Endothelial cell of umbilical vein (primary cell): ENCODE measurements at regions of chr2 and their contacts with region 1.

Region 1: GRCh38 chr2:241637000-241637791 is at the starts of genes ATG4B and THAP4:
- DNase-seq: peak; percentile 85
- H3K4me3 ChIP-seq: peak within 1 kb of the TSS; percentile 64 to 99 (median 95)
- H3K27ac ChIP-seq: peak within 1 kb of the TSS; percentile 92
- H3K4me1 ChIP-seq: peaks cover 12% of the 10 kb centered on the region
- H3K27me3 ChIP-seq: no peaks in the 10 kb centered on the region
- CTCF ChIP-seq: no peak
- POLR2A ChIP-seq: peak; percentile 76
- total RNA-seq, gene ATG4B: 83.6 and 85.6 TPM in 2 replicates
- total RNA-seq, gene THAP4: 47.4 and 49.0 TPM in 2 replicates

Region 2: DNA sequence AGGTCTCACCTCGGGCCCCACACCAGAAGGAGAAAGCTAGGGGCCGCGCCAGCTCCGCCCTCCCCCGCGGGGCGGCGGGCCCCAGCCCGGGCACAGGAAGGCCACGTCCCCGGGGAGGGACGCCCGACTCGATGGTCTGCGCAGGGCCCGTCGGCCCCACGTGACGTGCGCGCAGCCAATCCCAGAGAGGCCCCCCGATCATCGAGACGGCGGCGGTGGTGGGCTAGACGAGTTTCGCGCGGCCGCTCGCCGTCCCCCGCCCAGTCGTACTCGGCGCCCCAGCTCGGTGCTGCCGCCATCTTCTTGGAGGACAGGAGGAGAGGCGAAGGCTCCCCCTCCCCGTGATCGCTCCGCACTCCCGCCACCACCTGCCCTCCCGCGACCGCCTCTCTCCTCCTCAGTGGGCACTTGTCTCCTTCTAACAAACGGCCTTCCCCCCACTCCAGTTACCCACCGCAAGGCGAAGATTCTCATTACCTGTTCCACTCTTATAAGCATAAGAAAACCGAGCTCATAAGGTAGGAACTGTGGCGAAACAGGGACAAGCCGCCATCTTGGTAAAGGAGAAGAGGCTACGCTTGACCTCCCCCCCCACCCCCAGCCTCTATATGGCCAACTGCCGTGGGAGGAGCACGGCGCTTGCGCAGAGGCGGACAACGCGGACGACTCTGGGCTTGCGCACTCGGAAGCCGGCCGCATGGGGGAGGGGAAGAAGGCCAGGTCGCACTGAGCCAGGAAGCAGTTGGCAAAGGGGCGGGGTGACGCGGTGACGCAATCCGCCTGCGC is 321.9 kb before region 1 on chr2 and contains the start of gene HDLBP:
- CTCF ChIA-PET with region 1: no interaction called
- POLR2A ChIA-PET with region 1: no interaction called
- dilution Hi-C with region 1: no loop called
- intact Hi-C with region 1: loop called (anchors 1 kb)
- DNase-seq: peak; percentile 99
- H3K4me3 ChIP-seq: peak within 1 kb of the TSS; percentile 67 to 93 (median 92)
- H3K27ac ChIP-seq: peak within 1 kb of the TSS; percentile 90
- H3K4me1 ChIP-seq: peaks cover 36% of the 10 kb centered on the region
- H3K27me3 ChIP-seq: no peaks in the 10 kb centered on the region
- CTCF ChIP-seq: peak; percentile 14 to 33
- POLR2A ChIP-seq: peak; percentile 89
- total RNA-seq, gene HDLBP: 554 and 569 TPM in 2 replicates

Region 3: DNA sequence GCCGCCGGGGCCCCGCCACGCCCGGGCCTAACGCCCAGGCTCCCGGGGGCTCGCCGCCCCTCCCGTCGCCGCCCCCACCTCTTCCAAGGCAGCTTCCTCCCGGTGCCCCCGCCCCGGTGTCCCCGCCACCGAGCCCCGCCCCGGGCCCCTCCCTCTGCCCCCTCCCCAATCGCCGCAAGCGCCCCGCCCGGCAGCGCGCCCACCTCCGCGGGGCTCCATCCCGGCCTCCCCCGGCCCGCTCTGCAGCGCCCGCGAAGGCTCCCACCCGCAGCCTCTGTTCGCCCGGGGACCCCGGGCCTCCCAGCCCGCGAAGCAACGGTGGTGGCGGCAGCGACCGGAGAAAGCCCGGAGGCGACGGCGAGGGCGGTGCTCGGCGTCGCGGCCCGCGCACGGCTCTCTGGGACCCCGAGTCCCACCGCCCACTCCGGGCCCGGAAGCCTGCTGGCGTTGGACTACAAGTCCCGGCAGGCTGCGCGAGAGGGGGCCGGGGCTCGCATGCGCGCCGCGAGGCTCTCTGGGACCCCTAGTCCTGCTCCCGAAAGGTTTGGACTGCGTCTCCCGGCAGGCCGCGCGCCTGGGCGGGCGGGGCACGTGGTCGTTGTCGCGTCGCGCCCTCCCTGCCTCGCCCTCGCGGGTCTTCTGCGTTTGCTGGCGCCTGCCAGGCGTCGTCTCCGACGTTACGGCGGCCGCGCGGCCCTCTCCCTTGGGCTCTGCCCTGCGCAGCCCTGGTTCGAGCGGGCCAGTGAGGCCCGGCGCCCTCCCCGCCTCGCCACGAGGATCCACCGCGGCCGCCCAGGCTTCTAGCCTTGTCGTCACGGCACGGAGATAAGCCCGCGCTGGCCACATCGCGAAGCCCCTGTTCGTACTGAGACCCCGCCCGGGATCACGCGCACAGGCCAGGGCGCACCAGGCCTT is 128.7 kb before region 1 on chr2 and contains the start of gene STK25:
- CTCF ChIA-PET with region 1: interaction called, 4 read pairs
- POLR2A ChIA-PET with region 1: no interaction called
- dilution Hi-C with region 1: no loop called
- intact Hi-C with region 1: loop called (anchors 1 kb)
- DNase-seq: peak; percentile 98
- H3K4me3 ChIP-seq: peak within 1 kb of the TSS; percentile 55 to 84 (median 77)
- H3K27ac ChIP-seq: peak within 1 kb of the TSS; percentile 14
- H3K4me1 ChIP-seq: peaks cover 16% of the 10 kb centered on the region
- H3K27me3 ChIP-seq: no peaks in the 10 kb centered on the region
- CTCF ChIP-seq: no peak
- POLR2A ChIP-seq: peak; percentile 88
- total RNA-seq, gene STK25: 236 and 286 TPM in 2 replicates

Region 4: GRCh38 chr2:241609859-241610793 is 27.1 kb before region 1 on chr2:
- CTCF ChIA-PET with region 1: interaction called, 4 read pairs
- POLR2A ChIA-PET with region 1: no interaction called
- dilution Hi-C with region 1: no loop called
- intact Hi-C with region 1: loop called (anchors 1 kb)
- DNase-seq: peak; percentile 83
- H3K4me3 ChIP-seq: peak overlapping the region; percentile 15 to 53 (median 15)
- H3K27ac ChIP-seq: peak overlapping the region; percentile 28
- H3K4me1 ChIP-seq: peaks cover 5% of the 10 kb centered on the region
- H3K27me3 ChIP-seq: no peaks in the 10 kb centered on the region
- CTCF ChIP-seq: peak; percentile 62 to 67
- POLR2A ChIP-seq: peak; percentile 35

Region 5: DNA sequence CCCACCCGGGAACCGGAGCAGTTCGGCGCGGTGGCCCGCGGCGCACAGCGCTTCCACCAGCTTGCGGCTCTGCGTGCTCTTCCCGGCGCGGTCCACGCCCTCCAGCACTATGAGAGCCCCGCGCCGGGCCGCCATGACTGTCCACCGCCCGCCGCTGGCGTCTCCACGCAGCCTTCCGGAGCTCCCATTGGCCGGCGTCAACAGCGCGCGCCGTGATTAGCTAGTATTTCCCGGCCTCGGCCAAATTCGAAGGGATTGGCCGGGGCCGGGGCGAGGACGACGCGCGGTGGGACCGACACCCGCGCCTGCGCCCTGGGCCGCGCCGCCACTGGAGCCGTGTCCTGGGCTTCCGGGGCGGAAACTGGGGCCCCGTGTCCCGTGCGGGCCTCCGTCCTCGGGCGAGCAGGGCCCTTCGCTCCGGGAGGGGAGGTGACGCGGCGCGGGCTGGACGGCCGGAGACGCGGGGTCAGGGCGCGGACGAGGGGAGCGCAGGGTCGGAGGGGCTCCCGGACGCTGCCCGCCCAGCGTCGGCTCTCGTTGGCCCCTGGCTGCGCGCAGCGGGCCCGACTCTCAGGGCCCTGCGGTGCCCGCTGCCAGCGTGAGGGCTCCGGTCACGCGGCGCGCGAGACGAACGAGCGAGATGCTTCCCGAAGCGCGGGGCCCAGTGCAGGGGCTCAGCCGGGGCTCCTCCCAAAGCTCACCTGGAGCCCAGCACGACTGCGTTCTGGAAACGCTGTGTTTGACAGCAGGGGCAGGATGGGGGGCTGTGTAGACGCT is 49.6 kb after region 1 on chr2 and contains the start of gene DTYMK:
- CTCF ChIA-PET with region 1: no interaction called
- POLR2A ChIA-PET with region 1: no interaction called
- dilution Hi-C with region 1: no loop called
- intact Hi-C with region 1: loop called (anchors 2 kb)
- DNase-seq: peak; percentile 96
- H3K4me3 ChIP-seq: peak within 1 kb of the TSS; percentile 90 to 93 (median 92)
- H3K27ac ChIP-seq: peak within 1 kb of the TSS; percentile 75
- H3K4me1 ChIP-seq: peaks cover 13% of the 10 kb centered on the region
- H3K27me3 ChIP-seq: no peaks in the 10 kb centered on the region
- CTCF ChIP-seq: no peak
- POLR2A ChIP-seq: peak; percentile 91
- total RNA-seq, gene DTYMK: 91.9 and 104 TPM in 2 replicates

Region 6: DNA sequence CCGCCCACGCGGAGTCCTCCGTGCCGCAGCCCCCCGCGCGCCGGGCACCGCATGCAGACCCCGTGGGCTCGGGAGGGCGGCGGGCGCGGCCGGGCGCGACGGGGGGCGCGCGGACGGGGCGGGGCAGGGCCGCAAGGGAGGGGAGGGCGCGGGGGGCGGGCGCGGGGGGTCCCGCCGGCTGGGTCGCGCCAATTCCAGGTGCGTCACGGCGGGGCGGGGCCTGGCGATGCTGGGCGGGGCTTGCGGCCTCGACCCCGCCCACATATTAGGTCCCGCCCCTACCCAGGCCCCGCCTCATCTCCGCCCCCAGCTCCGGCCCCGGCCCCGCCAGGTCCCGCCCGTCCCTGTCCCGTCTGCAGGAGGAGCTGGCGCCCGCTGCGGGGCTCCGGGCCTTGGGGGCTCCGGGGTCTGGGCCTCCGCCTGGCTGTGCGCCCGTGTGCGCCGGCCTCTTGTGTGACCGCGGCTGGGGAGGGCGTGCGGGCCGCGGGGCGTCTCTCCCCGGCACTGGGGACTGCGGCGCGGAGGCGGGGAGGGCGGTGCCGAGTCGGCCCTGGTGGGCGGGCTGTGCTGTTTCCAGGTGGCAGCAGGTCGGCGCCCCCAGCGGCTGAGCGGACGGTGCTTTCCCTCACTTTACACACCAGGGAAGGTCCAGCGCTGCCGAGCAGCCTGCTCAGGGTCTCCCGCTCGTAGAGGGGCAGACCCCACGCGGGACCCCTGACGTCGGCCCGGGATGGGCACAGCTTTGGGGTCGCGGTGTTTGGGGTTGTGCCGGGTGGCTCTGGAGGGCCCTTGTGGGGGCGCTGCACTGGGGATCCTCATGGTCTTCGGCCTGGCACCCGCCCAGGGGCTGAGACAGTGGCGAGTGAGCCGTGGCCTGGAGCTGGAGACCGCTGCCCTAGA is 65.2 kb after region 1 on chr2:
- CTCF ChIA-PET with region 1: no interaction called
- POLR2A ChIA-PET with region 1: no interaction called
- dilution Hi-C with region 1: no loop called
- intact Hi-C with region 1: loop called (anchors 1 kb)
- DNase-seq: peak; percentile 82
- H3K4me3 ChIP-seq: peak overlapping the region; percentile 49 to 75 (median 64)
- H3K27ac ChIP-seq: peak overlapping the region; percentile 15
- H3K4me1 ChIP-seq: peaks cover 6% of the 10 kb centered on the region
- H3K27me3 ChIP-seq: no peaks in the 10 kb centered on the region
- CTCF ChIP-seq: peak; percentile 45 to 56
- POLR2A ChIP-seq: no peak